HepG2 (cell line): ENCODE measurements at regions of chr12 and their contacts with region 1.

Region 1: DNA sequence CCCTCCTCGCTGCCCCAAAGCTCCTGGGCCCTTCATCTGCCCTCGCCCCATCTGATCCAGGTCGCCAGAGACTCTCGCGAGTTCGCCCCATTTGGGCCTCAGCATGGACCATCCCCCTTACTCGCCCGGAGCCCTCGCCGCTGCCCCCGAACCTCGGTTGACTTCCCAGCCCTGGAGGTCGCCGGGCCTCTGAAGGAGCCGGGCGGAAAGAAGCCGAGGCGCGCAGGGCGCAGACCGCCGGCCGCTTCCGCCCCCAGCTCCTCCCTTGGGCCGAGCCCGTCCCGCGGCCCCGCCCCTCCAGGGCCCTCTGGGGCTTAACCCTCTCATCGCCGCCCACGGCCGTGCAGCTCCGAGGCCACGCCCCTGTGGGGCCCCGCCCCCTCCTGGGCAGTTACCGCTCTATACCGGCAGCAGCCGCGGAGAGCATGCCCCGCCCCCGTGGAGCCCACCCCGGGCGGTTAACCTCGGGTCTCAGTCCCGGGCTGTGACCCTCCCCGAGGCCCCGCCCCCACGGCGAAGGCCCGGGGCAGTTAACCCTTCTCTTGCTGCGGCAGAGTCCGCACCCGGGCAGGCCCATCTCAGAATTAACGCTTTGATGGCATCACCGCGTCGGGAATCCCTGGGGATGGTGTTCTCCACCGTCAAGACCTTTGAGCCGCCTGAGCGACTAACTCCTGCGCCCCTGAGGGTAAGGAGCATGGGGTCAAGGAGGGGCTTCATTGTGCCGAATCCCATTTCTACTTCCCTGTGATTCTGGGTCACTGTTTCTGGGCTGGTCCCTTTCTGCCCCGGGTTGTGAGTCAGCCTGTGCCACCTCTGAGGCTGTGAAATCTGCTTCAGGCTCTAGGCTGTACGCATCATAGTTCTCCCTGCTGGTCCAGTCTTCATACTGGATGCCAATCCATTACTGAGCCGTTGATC is at the start of gene SPSB2:
- DNase-seq: peak; percentile 94
- ATAC-seq: peak; percentile 81
- H3K4me3 ChIP-seq: peak within 1 kb of the TSS; percentile 74 to 95 (median 76)
- H3K27ac ChIP-seq: peak within 1 kb of the TSS; percentile 79
- H3K4me1 ChIP-seq: peaks cover 48% of the 10 kb centered on the region
- H3K27me3 ChIP-seq: no peaks in the 10 kb centered on the region; a peak in 1 of 5 replicates
- CTCF ChIP-seq: no peak
- EP300 ChIP-seq: 0 out of 4 replicates have a peak, but pooled peaks of 1 of the 2 experiments have one; percentile 5
- POLR2A ChIP-seq: no peak; a peak in 1 of 4 replicates
- RAD21 ChIP-seq: no peak
- total RNA-seq, gene SPSB2: 4.0 and 6.2 TPM in 2 replicates

Region 2: GRCh38 chr12:6723607-6724396 is 149.6 kb before region 1 on chr12 and contains the start of gene COPS7A:
- CTCF ChIA-PET with region 1: no interaction called
- POLR2A ChIA-PET with region 1: interaction called, 11 read pairs
- in situ Hi-C with region 1: no loop called
- intact Hi-C with region 1: no loop called
- DNase-seq: peak; percentile 97
- ATAC-seq: peak; percentile 97
- H3K4me3 ChIP-seq: peak within 1 kb of the TSS; percentile 65 to 93 (median 74)
- H3K27ac ChIP-seq: peak within 1 kb of the TSS; percentile 82
- H3K4me1 ChIP-seq: peaks cover 31% of the 10 kb centered on the region
- H3K27me3 ChIP-seq: no peaks in the 10 kb centered on the region
- CTCF ChIP-seq: peak; percentile 66
- EP300 ChIP-seq: peak in 1 of 2 experiments; percentile 58; a peak in 1 of 4 replicates
- POLR2A ChIP-seq: peak; percentile 68 to 85
- RAD21 ChIP-seq: peak; percentile 36; the same call in 1 of the 2 replicates
- total RNA-seq, gene COPS7A: 38.0 and 40.0 TPM in 2 replicates

Region 3: DNA sequence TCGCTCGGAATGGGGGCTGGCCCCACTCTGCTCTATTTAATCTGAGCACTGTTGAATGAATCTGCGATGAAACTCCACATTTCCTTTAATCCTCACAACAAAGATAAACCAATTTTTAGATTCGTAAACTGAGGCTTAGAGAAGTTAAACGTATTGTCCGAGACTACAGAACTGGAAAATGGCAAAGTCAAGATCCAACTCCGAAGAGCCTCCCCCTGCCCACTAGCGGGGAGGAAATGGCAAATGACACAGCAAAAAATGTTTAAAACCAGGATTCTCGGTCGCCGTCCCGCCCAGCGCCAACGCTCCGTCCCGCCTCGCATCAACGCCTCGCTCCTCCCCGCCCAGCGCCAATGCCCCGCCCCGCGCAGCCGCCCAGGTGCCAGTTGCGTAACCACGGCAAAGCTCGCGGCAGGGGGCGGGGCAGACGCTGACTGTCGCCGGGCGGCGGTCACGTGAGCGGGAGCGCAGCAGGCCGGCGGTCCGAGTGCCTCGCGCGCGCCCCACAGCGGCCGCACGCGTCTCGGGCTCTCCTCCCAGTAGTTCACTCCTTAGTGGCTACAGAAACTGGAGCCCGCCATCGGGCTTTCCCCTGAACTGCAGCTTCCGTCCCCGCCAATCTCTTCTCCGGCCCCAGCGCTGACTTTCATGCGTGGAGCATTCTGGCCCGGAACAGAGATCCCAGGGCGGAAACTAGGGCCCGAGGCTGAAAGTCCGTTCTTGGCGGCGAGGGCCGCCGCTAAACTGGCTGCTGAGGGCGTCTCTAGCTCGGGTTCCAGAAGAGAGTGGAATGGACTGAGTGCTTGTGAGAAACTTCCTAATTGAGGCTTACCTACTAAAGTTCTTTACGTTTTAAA is 17.7 kb after region 1 on chr12:
- CTCF ChIA-PET with region 1: interaction called, 24 read pairs
- POLR2A ChIA-PET with region 1: interaction called, 73 read pairs
- in situ Hi-C with region 1: no loop called
- intact Hi-C with region 1: loop called (anchors 1 kb)
- DNase-seq: peak; percentile 88
- ATAC-seq: peak; percentile 96
- H3K4me3 ChIP-seq: peak overlapping the region; percentile 50 to 79 (median 65)
- H3K27ac ChIP-seq: peak overlapping the region; percentile 94
- H3K4me1 ChIP-seq: peaks cover 52% of the 10 kb centered on the region
- H3K27me3 ChIP-seq: no peaks in the 10 kb centered on the region; a peak in 1 of 5 replicates
- CTCF ChIP-seq: peak; percentile 87
- EP300 ChIP-seq: peak in 1 of 2 experiments; percentile 56; a peak in 3 of 4 replicates
- POLR2A ChIP-seq: peak; percentile 73 to 78
- RAD21 ChIP-seq: peak; percentile 99

Region 4: DNA sequence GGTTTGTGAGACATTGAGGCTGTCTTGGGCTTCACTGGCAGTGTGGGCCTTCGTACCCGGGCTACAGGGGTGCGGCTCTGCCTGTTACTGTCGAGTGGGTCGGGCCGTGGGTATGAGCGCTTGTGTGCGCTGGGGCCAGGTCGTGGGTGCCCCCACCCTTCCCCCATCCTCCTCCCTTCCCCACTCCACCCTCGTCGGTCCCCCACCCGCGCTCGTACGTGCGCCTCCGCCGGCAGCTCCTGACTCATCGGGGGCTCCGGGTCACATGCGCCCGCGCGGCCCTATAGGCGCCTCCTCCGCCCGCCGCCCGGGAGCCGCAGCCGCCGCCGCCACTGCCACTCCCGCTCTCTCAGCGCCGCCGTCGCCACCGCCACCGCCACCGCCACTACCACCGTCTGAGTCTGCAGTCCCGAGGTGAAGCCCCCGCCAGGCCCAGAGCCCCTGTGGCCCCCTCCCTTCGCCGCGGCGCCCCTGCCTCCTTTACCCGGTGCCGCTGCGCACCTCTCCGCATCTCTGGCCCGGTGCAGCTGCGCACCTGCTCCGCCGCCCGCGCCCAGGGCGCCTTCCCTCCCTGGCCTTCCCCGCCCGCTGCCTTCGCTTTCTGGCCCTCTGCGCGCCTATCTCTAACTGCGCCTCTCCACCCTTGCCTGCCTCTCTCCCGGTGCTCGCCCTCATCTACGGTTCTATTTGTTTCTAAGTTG is 41.0 kb after region 1 on chr12 and contains the start of gene ENO2:
- CTCF ChIA-PET with region 1: no interaction called
- POLR2A ChIA-PET with region 1: interaction called, 13 read pairs
- in situ Hi-C with region 1: no loop called
- intact Hi-C with region 1: no loop called
- DNase-seq: peak; percentile 44
- ATAC-seq: peak; percentile 89
- H3K4me3 ChIP-seq: peak within 1 kb of the TSS; percentile 63 to 90 (median 77)
- H3K27ac ChIP-seq: peak within 1 kb of the TSS; percentile 84
- H3K4me1 ChIP-seq: peaks cover 48% of the 10 kb centered on the region
- H3K27me3 ChIP-seq: no peaks in the 10 kb centered on the region
- CTCF ChIP-seq: no peak
- EP300 ChIP-seq: no peak
- POLR2A ChIP-seq: peak in 1 of 2 experiments; percentile 68; a peak in 2 of 4 replicates
- RAD21 ChIP-seq: no peak
- total RNA-seq, gene ENO2: 15.9 and 19.3 TPM in 2 replicates

Region 5: GRCh38 chr12:6937481-6938297 is 64.3 kb after region 1 on chr12:
- CTCF ChIA-PET with region 1: interaction called, 14 read pairs
- POLR2A ChIA-PET with region 1: interaction called, 36 read pairs
- in situ Hi-C with region 1: no loop called
- intact Hi-C with region 1: no loop called
- DNase-seq: peak; percentile 91
- ATAC-seq: peak; percentile 93
- H3K4me3 ChIP-seq: peak overlapping the region; percentile 49 to 78 (median 70); a peak in 5 of 6 replicates
- H3K27ac ChIP-seq: peak overlapping the region; percentile 90
- H3K4me1 ChIP-seq: peaks cover 26% of the 10 kb centered on the region
- H3K27me3 ChIP-seq: no peaks in the 10 kb centered on the region
- CTCF ChIP-seq: peak; percentile 99
- EP300 ChIP-seq: 0 out of 4 replicates have a peak, but pooled peaks of 1 of the 2 experiments have one; percentile 10
- POLR2A ChIP-seq: peak in 1 of 2 experiments; percentile 63; a peak in 2 of 4 replicates
- RAD21 ChIP-seq: peak; percentile 66; the same call in 1 of the 2 replicates